Activated naive CD4-positive, alpha-beta T cell treated with anti-CD3 and anti-CD28 coated beads, Interleukin-2, amount 10 ng/mL, durations not matched to agents 7 days and 5 days (primary cell): ENCODE measurements at regions of chr1 and their contacts with region 1.

Region 1: GRCh38 chr1:156146020-156146768 is 7.2 kb upstream of the SEMA4A start:
- DNase-seq: peak; percentile 59
- H3K4me3 Mint-ChIP-seq: peak overlapping the region; percentile 4
- H3K27ac Mint-ChIP-seq: peak overlapping the region; percentile 70
- H3K4me1 Mint-ChIP-seq: peaks cover 29% of the 10 kb centered on the region
- H3K27me3 Mint-ChIP-seq: no peaks in the 10 kb centered on the region

Region 2: DNA sequence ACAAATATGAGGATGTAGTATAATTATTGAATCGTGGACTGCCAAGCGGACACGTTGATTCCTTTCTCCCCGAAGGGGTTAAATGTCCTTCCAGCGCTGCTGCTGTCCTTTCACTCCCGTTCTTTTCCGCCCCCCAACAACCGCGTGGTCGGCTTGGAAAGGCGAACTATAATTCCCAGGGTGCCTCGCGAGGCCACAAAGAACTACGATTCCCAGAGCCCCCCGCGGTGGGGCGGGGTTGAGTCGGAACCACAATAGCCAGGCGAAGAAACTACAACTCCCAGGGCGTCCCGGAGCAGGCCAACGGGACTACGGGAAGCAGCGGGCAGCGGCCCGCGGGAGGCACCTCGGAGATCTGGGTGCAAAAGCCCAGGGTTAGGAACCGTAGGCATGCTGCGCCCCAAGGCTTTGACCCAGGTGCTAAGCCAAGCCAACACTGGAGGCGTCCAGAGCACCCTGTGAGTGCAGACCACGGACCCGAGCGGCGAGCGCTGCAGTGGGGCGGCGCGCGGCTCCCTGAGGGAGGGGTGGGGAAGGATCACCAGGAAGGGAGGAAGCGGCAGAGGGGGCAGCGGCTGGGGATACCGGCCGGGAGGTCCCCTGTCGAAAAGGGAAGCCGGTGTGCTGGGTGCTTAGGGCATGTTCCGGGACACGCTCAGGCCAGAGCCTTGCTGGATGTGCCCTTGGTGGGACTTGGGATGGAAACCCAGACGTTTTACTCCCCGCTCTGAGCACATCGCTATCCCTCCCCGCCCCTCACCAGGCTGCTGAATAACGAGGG is 91.5 kb before region 1 on chr1 and contains the start of gene LAMTOR2:
- CTCF ChIA-PET with region 1: no interaction called
- DNase-seq: peak; percentile 98
- H3K4me3 Mint-ChIP-seq: peak within 1 kb of the TSS; percentile 97
- H3K27ac Mint-ChIP-seq: peak within 1 kb of the TSS; percentile 96
- H3K4me1 Mint-ChIP-seq: peaks cover 39% of the 10 kb centered on the region
- H3K27me3 Mint-ChIP-seq: no peaks in the 10 kb centered on the region

Region 3: GRCh38 chr1:156129706-156130581 is 16.2 kb before region 1 on chr1:
- CTCF ChIA-PET with region 1: interaction called, 11 read pairs
- DNase-seq: peak; percentile 87
- H3K4me3 Mint-ChIP-seq: no peak overlapping the region
- H3K27ac Mint-ChIP-seq: no peak overlapping the region
- H3K4me1 Mint-ChIP-seq: peaks cover 51% of the 10 kb centered on the region
- H3K27me3 Mint-ChIP-seq: peaks cover 54% of the 10 kb centered on the region

Region 4: GRCh38 chr1:156160743-156161171 is 14.6 kb after region 1 on chr1:
- CTCF ChIA-PET with region 1: interaction called, 14 read pairs
- DNase-seq: peak; percentile 74
- H3K4me3 Mint-ChIP-seq: peak overlapping the region; percentile 61
- H3K27ac Mint-ChIP-seq: no peak overlapping the region
- H3K4me1 Mint-ChIP-seq: peaks cover 47% of the 10 kb centered on the region
- H3K27me3 Mint-ChIP-seq: peaks cover 4% of the 10 kb centered on the region

Region 5: GRCh38 chr1:156198831-156199349 is 52.7 kb after region 1 on chr1:
- CTCF ChIA-PET with region 1: interaction called, 20 read pairs
- DNase-seq: no peak
- H3K4me3 Mint-ChIP-seq: no peak overlapping the region
- H3K27ac Mint-ChIP-seq: peak overlapping the region; percentile 80
- H3K4me1 Mint-ChIP-seq: peaks cover 66% of the 10 kb centered on the region
- H3K27me3 Mint-ChIP-seq: no peaks in the 10 kb centered on the region

Region 6: DNA sequence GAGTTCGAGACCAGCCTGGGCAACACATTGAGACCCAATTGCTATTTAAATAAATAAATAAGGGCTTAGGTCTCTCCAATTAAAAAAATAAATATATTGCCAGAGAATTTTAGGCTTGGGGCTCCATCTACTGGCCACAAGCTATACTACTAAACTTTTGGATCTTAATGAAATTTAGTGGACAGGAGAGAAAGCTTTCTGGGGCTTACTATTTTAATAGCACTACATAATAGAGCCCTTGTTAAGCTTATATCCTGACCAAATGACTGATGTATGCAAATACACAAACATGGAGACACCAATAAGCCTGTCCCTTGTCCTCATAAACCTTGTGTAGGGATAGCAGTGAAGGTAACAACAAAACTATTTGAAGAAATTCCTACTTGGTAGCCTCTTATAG is 173.5 kb after region 1 on chr1:
- CTCF ChIA-PET with region 1: interaction called, 73 read pairs
- DNase-seq: peak; percentile 49
- H3K4me3 Mint-ChIP-seq: no peak overlapping the region
- H3K27ac Mint-ChIP-seq: no peak overlapping the region
- H3K4me1 Mint-ChIP-seq: no peaks in the 10 kb centered on the region
- H3K27me3 Mint-ChIP-seq: no peaks in the 10 kb centered on the region